ENCODE measurements at regions of chr6 and their contacts with region 1.

Region 1: GRCh38 chr6:134748484-134748883 is 201.4 kb downstream of the ALDH8A1 start:
- DNase-seq: no peak
- ATAC-seq: no peak
- H3K4me3 ChIP-seq: no peak overlapping the region
- H3K4me3 Mint-ChIP-seq: no peak overlapping the region
- H3K27ac ChIP-seq: no peak overlapping the region
- H3K27ac Mint-ChIP-seq: no peak overlapping the region
- H3K4me1 ChIP-seq: peaks cover 0 to 3% of the 10 kb centered on the region in 2 experiments
- H3K4me1 Mint-ChIP-seq: peaks cover 0 to 9% (median 0%) of the 10 kb centered on the region in 3 donors
- H3K27me3 ChIP-seq: peaks cover 0 to 3% of the 10 kb centered on the region in 2 experiments
- H3K27me3 Mint-ChIP-seq: peaks cover 8 to 16% of the 10 kb centered on the region in 2 donors

Region 2: GRCh38 chr6:134211297-134211696 is 537.2 kb before region 1 on chr6:
- CTCF ChIA-PET with region 1: no interaction called
- POLR2A ChIA-PET with region 1: no interaction called
- DNase-seq: no peak
- ATAC-seq: no peak
- H3K4me3 ChIP-seq: no peak overlapping the region
- H3K4me3 Mint-ChIP-seq: no peak overlapping the region
- H3K27ac ChIP-seq: no peak overlapping the region
- H3K27ac Mint-ChIP-seq: no peak overlapping the region
- H3K4me1 ChIP-seq: no peaks in the 10 kb centered on the region
- H3K4me1 Mint-ChIP-seq: peaks cover 3% of the 10 kb centered on the region in 3 donors
- H3K27me3 ChIP-seq: no peaks in the 10 kb centered on the region
- H3K27me3 Mint-ChIP-seq: no peaks in the 10 kb centered on the region

Region 3: GRCh38 chr6:134738211-134738900 is 10.1 kb before region 1 on chr6:
- CTCF ChIA-PET with region 1: interaction called in 1 of 2 experiments, 12 read pairs
- POLR2A ChIA-PET with region 1: no interaction called
- DNase-seq: no peak
- ATAC-seq: no peak
- H3K4me3 ChIP-seq: no peak overlapping the region
- H3K4me3 Mint-ChIP-seq: no peak overlapping the region
- H3K27ac ChIP-seq: no peak overlapping the region
- H3K27ac Mint-ChIP-seq: no peak overlapping the region
- H3K4me1 ChIP-seq: no peaks in the 10 kb centered on the region
- H3K4me1 Mint-ChIP-seq: no peaks in the 10 kb centered on the region
- H3K27me3 ChIP-seq: no peaks in the 10 kb centered on the region
- H3K27me3 Mint-ChIP-seq: peaks cover 0 to 3% of the 10 kb centered on the region in 2 donors

Region 4: DNA sequence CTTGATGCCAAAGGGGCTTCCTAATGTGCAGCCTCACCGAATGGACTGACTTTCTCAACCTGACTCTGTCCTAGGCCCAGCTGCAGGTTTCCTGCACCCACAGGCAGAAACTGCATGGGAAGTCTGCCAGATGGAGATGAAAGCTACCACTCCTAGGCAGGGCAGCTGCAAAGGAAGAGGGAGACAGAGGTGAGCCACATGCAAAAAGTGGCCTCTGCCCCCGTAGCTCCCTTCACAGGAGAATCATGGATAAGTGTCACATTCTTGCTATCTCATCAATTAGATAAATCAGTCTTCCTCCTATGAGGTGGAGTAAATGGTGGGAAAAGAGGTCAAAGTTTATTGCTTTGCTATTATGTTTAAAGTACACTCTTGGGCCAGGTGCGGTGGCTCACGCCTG is 10.1 kb after region 1 on chr6:
- CTCF ChIA-PET with region 1: no interaction called
- POLR2A ChIA-PET with region 1: no interaction called
- DNase-seq: no peak
- ATAC-seq: no peak
- H3K4me3 ChIP-seq: no peak overlapping the region
- H3K4me3 Mint-ChIP-seq: no peak overlapping the region
- H3K27ac ChIP-seq: no peak overlapping the region
- H3K27ac Mint-ChIP-seq: no peak overlapping the region
- H3K4me1 ChIP-seq: no peaks in the 10 kb centered on the region
- H3K4me1 Mint-ChIP-seq: no peaks in the 10 kb centered on the region
- H3K27me3 ChIP-seq: no peaks in the 10 kb centered on the region
- H3K27me3 Mint-ChIP-seq: peaks cover 2 to 6% of the 10 kb centered on the region in 2 donors